ENCODE measurements at regions of chr1 and their contacts with region 1.

Region 1: DNA sequence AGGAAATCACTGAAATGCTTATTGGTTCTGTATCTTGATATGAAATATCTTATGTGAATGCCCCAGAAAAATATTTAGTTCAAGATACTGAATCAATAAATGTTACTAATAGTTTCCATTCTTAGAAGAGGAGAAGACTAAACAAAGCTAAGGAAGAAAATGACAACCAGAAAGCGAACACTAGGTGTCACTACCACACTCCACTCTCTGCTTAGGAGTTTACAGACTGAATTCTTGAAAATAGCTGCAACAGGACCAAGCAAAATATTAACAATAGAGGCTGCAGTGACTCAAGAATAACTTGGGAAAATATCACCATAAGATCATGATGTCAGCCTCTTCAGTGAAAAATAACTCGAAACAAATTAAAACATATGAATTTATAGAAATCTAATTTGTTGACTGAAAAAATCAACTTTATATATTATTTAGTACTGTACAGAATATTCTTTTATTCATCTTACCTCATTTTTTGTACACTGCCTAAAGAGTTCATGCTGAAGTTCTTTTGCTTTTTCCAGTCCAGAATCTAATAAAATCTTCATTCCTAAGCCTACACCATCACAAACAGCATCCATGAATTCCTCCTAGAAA is 61.6 kb downstream of the KIF14 start:
- DNase-seq: no peak
- H3K4me3 ChIP-seq: no peak overlapping the region
- H3K27ac ChIP-seq: no peak overlapping the region
- H3K4me1 ChIP-seq: no peaks in the 10 kb centered on the region
- H3K27me3 ChIP-seq: no peaks in the 10 kb centered on the region
- CTCF ChIP-seq: peak; percentile 14 to 70 (median 43)

Region 2: GRCh38 chr1:201042779-201043461 is 484.0 kb after region 1 on chr1:
- intact Hi-C with region 1: loop called (anchors 5 kb)
- DNase-seq: peak in 1 of 2 donors; percentile 71
- H3K4me3 ChIP-seq: no peak overlapping the region
- H3K27ac ChIP-seq: no peak overlapping the region
- H3K4me1 ChIP-seq: no peaks in the 10 kb centered on the region
- H3K27me3 ChIP-seq: no peaks in the 10 kb centered on the region
- CTCF ChIP-seq: peak; percentile 63 to 78 (median 77)

Region 3: GRCh38 chr1:201114236-201115131 is 555.5 kb after region 1 on chr1:
- intact Hi-C with region 1: loop called (anchors 5 kb)
- DNase-seq: peak; percentile 37 to 93
- H3K4me3 ChIP-seq: peak overlapping the region; percentile 66 to 74
- H3K27ac ChIP-seq: peak overlapping the region in 1 of 2 donors; percentile 29
- H3K4me1 ChIP-seq: no peaks in the 10 kb centered on the region
- H3K27me3 ChIP-seq: no peaks in the 10 kb centered on the region
- CTCF ChIP-seq: peak; percentile 82 to 88 (median 87)

Region 4: DNA sequence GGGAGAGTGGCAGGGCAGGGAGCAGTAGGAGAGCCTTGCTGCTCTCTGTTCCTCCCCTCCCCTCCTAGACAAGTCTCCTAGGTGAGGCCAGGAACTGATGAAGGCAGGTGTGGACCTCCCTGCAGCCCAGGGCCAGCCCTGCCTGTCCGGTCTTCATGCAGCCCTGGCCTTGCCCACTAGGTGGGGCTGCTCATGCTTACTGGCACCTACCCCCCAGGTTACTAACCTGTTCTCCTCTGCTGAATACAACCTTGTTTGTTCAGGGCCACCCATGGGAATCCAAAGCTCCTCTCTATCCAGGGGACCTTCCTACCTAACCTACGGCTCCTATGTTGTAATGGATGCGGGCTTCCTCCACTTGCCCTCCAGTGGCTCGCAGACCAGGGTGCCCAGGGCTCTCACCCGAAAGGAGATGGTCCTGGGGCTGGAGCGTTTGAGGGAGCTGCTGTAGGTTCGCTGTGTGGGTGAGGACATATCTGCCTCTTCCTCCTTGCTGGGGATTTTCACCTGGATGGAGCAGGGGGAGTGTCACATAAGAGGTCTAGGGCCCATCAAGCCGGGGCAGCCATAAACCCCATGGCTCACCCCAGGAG is 826.4 kb after region 1 on chr1:
- intact Hi-C with region 1: no loop called
- DNase-seq: no peak
- H3K4me3 ChIP-seq: no peak overlapping the region
- H3K27ac ChIP-seq: no peak overlapping the region
- H3K4me1 ChIP-seq: no peaks in the 10 kb centered on the region
- H3K27me3 ChIP-seq: no peaks in the 10 kb centered on the region
- CTCF ChIP-seq: peak in 2 of 3 experiments; percentile 48 to 50

Region 5: DNA sequence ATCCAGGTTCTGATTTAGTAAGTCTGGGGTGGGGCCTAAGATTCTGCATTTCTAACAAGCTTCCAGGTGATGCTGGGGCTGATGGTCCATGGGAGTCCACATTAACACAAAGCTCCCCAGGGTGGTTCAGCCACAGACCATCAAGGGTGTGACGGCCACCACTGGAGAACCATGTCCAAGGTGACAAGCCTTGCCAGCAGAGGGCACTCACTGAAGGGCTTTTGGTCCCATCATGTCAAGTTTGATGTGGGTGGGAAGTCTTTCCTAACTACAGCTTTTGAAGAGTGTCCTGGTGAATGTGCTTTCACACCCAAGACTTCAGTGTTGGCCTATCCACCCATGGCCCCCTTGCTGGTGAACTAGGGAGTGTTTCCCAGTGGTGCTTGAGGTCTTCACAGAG is 1715.6 kb after region 1 on chr1:
- intact Hi-C with region 1: no loop called
- DNase-seq: peak in 1 of 2 donors; percentile 42
- H3K4me3 ChIP-seq: no peak overlapping the region
- H3K27ac ChIP-seq: no peak overlapping the region
- H3K4me1 ChIP-seq: peaks cover 0 to 6% of the 10 kb centered on the region in 2 donors
- H3K27me3 ChIP-seq: no peaks in the 10 kb centered on the region
- CTCF ChIP-seq: peak in 1 of 3 experiments; percentile 15